A673 (cell line): ENCODE measurements at regions of chrX and their contacts with region 1.

Region 1: GRCh38 chrX:16628946-16629595 is 20.9 kb upstream of the S100G start:
- DNase-seq: peak; percentile 49
- H3K4me3 ChIP-seq: no peak overlapping the region
- H3K27ac ChIP-seq: no peak overlapping the region
- H3K4me1 ChIP-seq: peaks cover 12% of the 10 kb centered on the region
- H3K27me3 ChIP-seq: peaks cover 3% of the 10 kb centered on the region
- CTCF ChIP-seq: no peak

Region 2: GRCh38 chrX:16719334-16720084 is 90.4 kb after region 1 on chrX and contains the start of gene SYAP1:
- CTCF ChIA-PET with region 1: no interaction called
- POLR2A ChIA-PET with region 1: interaction called, 14 read pairs
- intact Hi-C with region 1: no loop called
- DNase-seq: peak; percentile 98
- H3K4me3 ChIP-seq: peak within 1 kb of the TSS; percentile 74
- H3K27ac ChIP-seq: peak within 1 kb of the TSS; percentile 94
- H3K4me1 ChIP-seq: no peaks in the 10 kb centered on the region
- H3K27me3 ChIP-seq: no peaks in the 10 kb centered on the region
- CTCF ChIP-seq: no peak
- total RNA-seq, gene SYAP1: 36.4 and 41.8 TPM in 2 replicates